ENCODE measurements at regions of chrX and their contacts with region 1.

Region 1: DNA sequence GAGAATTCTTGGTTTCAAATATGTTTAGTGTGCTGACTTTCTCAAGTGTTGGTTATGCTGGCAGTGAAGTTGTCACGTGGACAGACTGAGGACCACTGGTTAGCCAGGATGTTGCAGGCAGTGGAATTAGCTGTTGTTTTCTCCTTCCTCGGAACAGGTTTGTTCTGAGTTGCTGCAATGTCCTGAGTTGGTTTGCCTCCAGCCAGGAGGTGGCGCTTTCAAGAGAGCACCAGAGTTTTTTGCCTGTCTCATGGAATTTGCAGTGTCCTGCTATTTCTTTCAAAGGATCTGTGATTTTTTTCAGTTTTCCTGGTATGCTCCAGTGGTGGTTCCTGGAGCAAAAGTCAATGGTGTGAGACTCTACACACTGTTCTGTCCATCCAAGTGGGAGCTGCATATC is 158.1 kb upstream of the CXorf66 start:
- DNase-seq: no peak
- ATAC-seq: peak in 1 of 4 donors; percentile 31
- H3K4me3 ChIP-seq: no peak overlapping the region
- H3K27ac ChIP-seq: no peak overlapping the region
- H3K4me1 ChIP-seq: no peaks in the 10 kb centered on the region
- H3K27me3 ChIP-seq: peaks cover 0 to 5% of the 10 kb centered on the region in 2 donors
- CTCF ChIP-seq: peak; percentile 6 to 47 (median 22)
- POLR2A ChIP-seq: no peak

Region 2: DNA sequence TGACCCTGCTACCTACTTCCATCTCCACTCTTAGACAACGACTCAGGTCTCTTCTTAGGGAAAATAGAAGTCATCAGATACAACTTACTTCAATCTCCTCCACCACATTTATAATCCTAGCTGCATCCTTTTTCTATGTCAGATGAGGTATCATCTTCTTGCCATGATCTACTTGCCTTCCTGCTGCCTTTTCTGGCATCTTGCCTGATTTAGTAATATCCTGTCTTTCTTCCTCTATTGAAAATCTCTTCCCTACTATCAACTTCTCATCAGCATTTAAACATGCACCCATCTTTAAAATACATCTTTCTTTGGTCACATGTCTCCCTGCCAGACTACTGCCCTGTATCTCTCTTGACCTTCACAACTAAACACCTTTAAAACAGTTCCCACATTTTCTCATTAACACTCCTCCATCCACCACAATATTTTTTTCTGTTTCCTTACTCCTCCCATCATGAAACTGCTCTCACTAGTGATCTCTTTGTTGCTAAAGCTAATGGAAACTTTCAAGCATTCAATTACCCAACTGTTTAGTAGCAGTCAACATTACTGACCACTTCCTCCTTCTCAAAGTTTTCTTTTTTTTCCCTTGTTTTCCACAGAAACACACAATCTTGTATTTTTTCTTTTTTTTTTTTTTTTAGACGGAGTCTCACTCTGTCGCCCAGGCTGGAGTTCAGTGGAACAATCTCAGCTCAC is 57.3 kb before region 1 on chrX:
- intact Hi-C with region 1: loop called in 1 of 2 experiments (anchors 10 kb)
- DNase-seq: no peak
- ATAC-seq: no peak
- H3K4me3 ChIP-seq: no peak overlapping the region
- H3K27ac ChIP-seq: no peak overlapping the region
- H3K4me1 ChIP-seq: no peaks in the 10 kb centered on the region
- H3K27me3 ChIP-seq: no peaks in the 10 kb centered on the region
- CTCF ChIP-seq: no peak
- POLR2A ChIP-seq: no peak

Region 3: GRCh38 chrX:140206657-140207056 is 83.2 kb after region 1 on chrX:
- intact Hi-C with region 1: no loop called
- DNase-seq: no peak
- ATAC-seq: no peak
- H3K4me3 ChIP-seq: no peak overlapping the region
- H3K27ac ChIP-seq: no peak overlapping the region
- H3K4me1 ChIP-seq: no peaks in the 10 kb centered on the region
- H3K27me3 ChIP-seq: no peaks in the 10 kb centered on the region
- CTCF ChIP-seq: no peak
- POLR2A ChIP-seq: no peak

Region 4: DNA sequence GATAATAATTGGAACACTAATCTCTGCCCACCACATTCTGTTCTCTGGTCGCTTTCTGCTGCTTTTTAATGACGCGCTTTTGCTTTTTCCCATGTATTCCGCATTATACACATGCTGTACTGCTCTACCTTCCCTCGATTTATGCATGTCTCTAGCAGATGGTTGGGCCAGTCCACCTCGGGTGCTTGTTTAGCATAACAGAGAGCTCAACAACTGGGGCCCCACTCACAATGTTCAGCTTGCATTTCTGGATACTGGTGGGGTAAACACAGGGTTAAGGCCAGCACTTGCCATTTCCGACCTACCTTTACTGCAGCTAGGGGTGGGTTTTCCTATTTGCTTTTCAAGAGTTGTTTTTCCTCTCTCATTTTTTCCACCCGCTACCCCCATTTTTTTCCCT is 125.6 kb after region 1 on chrX:
- intact Hi-C with region 1: no loop called
- DNase-seq: no peak
- ATAC-seq: no peak
- H3K4me3 ChIP-seq: no peak overlapping the region
- H3K27ac ChIP-seq: no peak overlapping the region
- H3K4me1 ChIP-seq: no peaks in the 10 kb centered on the region
- H3K27me3 ChIP-seq: peaks cover 0 to 17% of the 10 kb centered on the region in 2 donors
- CTCF ChIP-seq: no peak
- POLR2A ChIP-seq: no peak

Region 5: GRCh38 chrX:140664939-140665338 is 541.5 kb after region 1 on chrX:
- intact Hi-C with region 1: loop called in 1 of 2 experiments (anchors 10 kb)
- DNase-seq: no peak
- ATAC-seq: peak in 3 of 4 donors; percentile 69 to 75 (median 69)
- H3K4me3 ChIP-seq: no peak overlapping the region
- H3K27ac ChIP-seq: no peak overlapping the region
- H3K4me1 ChIP-seq: no peaks in the 10 kb centered on the region
- H3K27me3 ChIP-seq: peaks cover 0 to 18% of the 10 kb centered on the region in 2 donors
- CTCF ChIP-seq: peak; percentile 44 to 52 (median 46)
- POLR2A ChIP-seq: no peak

Measured in right lobe of liver (tissue), 6 donors.